Body of pancreas (tissue), 4 donors: ENCODE measurements at regions of chr12 and their contacts with region 1.

Region 1: DNA sequence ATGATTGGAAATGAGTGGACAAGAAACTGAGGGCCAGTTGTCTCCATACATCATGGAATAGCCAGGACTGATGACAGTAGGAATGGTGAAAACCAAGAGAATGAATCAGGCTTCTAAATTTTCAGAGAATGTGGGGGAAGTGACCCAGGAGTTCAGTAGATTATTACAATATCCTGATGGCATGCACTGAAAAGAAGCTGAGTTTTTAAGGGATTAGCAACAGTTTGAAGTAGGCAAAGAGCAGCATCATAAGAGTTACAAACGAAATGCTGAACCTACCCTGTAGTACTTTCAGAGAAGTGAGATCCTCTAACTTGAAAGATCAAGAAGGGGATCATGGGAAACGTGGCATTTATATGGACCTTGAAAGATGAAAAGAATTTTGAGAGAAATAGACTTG is 13.2 kb downstream of the SLC2A14 start:
- DNase-seq: no peak
- ATAC-seq: no peak
- H3K4me3 ChIP-seq: no peak overlapping the region
- H3K27ac ChIP-seq: no peak overlapping the region
- H3K4me1 ChIP-seq: no peaks in the 10 kb centered on the region
- H3K27me3 ChIP-seq: no peaks in the 10 kb centered on the region
- CTCF ChIP-seq: no peak
- POLR2A ChIP-seq: no peak

Region 2: GRCh38 chr12:7995266-7995963 is 135.9 kb after region 1 on chr12:
- intact Hi-C with region 1: loop called (anchors 5 kb)
- DNase-seq: peak; percentile 69 to 88 (median 72)
- ATAC-seq: peak; percentile 94
- H3K4me3 ChIP-seq: no peak overlapping the region
- H3K27ac ChIP-seq: no peak overlapping the region
- H3K4me1 ChIP-seq: no peaks in the 10 kb centered on the region
- H3K27me3 ChIP-seq: no peaks in the 10 kb centered on the region
- CTCF ChIP-seq: peak; percentile 38 to 89 (median 78)
- POLR2A ChIP-seq: no peak